Mammary epithelial cell (primary cell): ENCODE measurements at regions of chr13 and their contacts with region 1.

Region 1: DNA sequence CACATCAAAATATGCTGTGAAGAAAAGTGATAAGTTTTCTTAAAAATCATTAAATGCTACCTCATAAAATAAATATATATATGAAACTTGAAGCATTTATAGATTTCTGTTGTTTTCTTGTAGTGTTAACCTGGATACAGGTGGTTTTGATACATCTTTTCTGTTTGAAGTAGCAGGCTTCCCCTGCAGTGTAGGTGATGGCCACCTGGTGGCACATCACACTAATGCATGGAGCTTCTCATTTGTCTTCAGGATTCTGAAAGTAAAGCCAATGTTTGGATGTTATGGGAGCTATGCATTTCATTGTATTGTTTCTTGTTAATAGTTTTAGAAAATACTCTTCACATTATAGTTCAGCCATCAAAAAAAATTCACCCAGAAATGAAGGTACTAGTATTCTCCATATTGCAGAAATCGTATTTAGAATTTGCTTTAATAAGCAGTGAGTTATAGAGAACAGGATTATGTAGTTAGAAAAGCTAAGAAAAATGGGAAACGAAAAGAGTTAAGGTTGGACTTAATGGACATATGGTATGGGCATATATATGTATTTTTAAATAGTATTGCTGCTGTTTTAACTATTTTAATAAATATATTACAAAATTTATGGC is 18.7 kb downstream of the GPR180 start:
- DNase-seq: peak; percentile 28
- H3K4me3 ChIP-seq: no peak overlapping the region
- H3K27ac ChIP-seq: no peak overlapping the region
- H3K4me1 ChIP-seq: no peaks in the 10 kb centered on the region
- H3K27me3 ChIP-seq: no peaks in the 10 kb centered on the region
- CTCF ChIP-seq: peak; percentile 83 to 89

Region 2: GRCh38 chr13:94435604-94436226 is 184.7 kb before region 1 on chr13:
- CTCF ChIA-PET with region 1: interaction called, 13 read pairs
- dilution Hi-C with region 1: no loop called
- in situ Hi-C with region 1: loop called in 1 of 2 experiments (anchors 5 kb)
- intact Hi-C with region 1: loop called (anchors 1 kb)
- DNase-seq: peak; percentile 28
- H3K4me3 ChIP-seq: no peak overlapping the region
- H3K27ac ChIP-seq: no peak overlapping the region
- H3K4me1 ChIP-seq: no peaks in the 10 kb centered on the region
- H3K27me3 ChIP-seq: peaks cover 3% of the 10 kb centered on the region
- CTCF ChIP-seq: peak; percentile 45 to 61

Region 3: GRCh38 chr13:94515374-94515773 is 105.0 kb before region 1 on chr13:
- CTCF ChIA-PET with region 1: no interaction called
- dilution Hi-C with region 1: no loop called
- in situ Hi-C with region 1: no loop called
- intact Hi-C with region 1: no loop called
- DNase-seq: no peak
- H3K4me3 ChIP-seq: no peak overlapping the region
- H3K27ac ChIP-seq: no peak overlapping the region
- H3K4me1 ChIP-seq: no peaks in the 10 kb centered on the region
- H3K27me3 ChIP-seq: no peaks in the 10 kb centered on the region
- CTCF ChIP-seq: no peak

Region 4: DNA sequence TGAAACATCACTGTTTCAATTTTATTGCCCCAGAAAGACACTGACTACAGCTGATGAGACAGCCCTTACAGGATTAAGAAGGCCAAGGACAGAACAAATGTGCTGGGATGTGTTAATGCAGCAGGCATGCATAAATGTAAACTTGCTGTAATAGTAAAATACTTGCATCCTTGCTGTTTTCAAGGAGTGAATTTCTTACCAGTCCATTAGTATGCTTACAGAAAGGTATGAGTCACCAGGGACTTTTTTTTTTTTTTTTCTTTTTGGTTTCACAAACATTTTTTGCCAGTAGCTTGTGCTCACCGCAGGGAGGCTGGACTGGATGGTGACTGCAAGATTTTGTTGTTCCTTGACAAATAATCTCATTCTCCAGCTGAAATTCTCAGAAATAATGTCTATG is 36.4 kb after region 1 on chr13:
- CTCF ChIA-PET with region 1: no interaction called
- dilution Hi-C with region 1: no loop called
- in situ Hi-C with region 1: no loop called
- intact Hi-C with region 1: loop called (anchors 5 kb)
- DNase-seq: peak; percentile 82
- H3K4me3 ChIP-seq: no peak overlapping the region
- H3K27ac ChIP-seq: no peak overlapping the region
- H3K4me1 ChIP-seq: peaks cover 8% of the 10 kb centered on the region
- H3K27me3 ChIP-seq: no peaks in the 10 kb centered on the region
- CTCF ChIP-seq: peak in 1 of 2 donors; percentile 12

Region 5: DNA sequence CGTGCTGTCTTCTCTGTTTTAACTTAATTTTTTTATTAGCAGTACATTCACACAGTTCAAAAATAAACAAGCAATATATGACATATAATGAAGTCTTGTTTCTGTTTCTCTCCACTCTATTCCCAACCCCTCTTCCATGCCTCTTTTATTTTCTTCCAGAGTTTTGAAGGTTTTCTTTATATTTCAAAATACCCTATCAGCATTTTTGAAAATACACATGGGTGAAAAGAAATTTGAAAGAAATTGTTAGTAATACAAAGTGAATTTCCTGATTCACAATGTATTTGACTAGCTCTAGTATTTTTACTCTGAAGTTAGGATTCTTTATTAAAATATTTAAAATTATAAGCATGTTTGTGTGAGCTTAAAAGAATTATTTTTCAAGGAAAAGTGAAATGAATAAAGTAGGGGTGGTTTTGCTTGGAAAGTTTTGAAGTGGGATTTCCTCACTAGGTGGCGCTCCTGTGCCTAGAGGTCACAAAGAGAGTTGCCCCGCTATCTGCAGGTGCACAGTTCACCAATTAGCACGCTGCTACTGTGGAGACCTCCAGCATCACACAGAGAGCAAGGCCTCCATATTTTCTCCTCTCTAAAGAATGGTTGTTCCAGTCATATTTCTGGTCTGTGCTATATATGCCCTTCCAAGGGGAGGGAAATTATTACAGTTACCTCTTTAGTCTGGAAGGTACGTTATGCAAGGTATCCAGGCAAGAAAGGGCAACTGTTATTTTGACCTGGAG is 54.4 kb after region 1 on chr13:
- CTCF ChIA-PET with region 1: no interaction called
- dilution Hi-C with region 1: no loop called
- in situ Hi-C with region 1: no loop called
- intact Hi-C with region 1: loop called (anchors 1 kb)
- DNase-seq: peak; percentile 24
- H3K4me3 ChIP-seq: no peak overlapping the region
- H3K27ac ChIP-seq: no peak overlapping the region
- H3K4me1 ChIP-seq: no peaks in the 10 kb centered on the region
- H3K27me3 ChIP-seq: peaks cover 2% of the 10 kb centered on the region
- CTCF ChIP-seq: peak; percentile 73 to 86

Region 6: GRCh38 chr13:94710881-94711560 is 90.6 kb after region 1 on chr13:
- CTCF ChIA-PET with region 1: no interaction called
- dilution Hi-C with region 1: no loop called
- in situ Hi-C with region 1: no loop called
- intact Hi-C with region 1: loop called (anchors 1 kb)
- DNase-seq: no peak
- H3K4me3 ChIP-seq: peak overlapping the region in 1 of 3 experiments; percentile 26
- H3K27ac ChIP-seq: no peak overlapping the region
- H3K4me1 ChIP-seq: peaks cover 20% of the 10 kb centered on the region
- H3K27me3 ChIP-seq: peaks cover 64% of the 10 kb centered on the region
- CTCF ChIP-seq: no peak

Region 7: DNA sequence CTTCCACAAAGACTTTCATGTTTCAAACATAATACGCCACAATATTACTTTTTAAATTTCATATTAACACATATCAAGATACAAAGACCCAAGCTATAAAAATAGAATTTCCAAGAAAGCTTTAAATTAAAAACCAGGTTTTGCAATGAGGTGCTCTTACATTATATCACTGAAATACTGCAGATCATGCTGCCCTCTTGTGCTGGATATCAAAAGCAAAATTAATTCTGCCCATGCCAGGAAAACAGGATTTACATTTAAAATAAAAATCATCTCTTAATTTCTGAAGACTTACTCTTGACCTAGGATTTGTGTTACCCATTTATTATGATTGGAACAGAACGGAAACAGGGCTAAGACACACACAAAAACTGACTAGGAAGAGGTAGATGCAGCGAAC is 535.8 kb after region 1 on chr13:
- CTCF ChIA-PET with region 1: no interaction called
- dilution Hi-C with region 1: no loop called
- in situ Hi-C with region 1: no loop called
- intact Hi-C with region 1: loop called (anchors 1 kb)
- DNase-seq: no peak
- H3K4me3 ChIP-seq: no peak overlapping the region
- H3K27ac ChIP-seq: no peak overlapping the region
- H3K4me1 ChIP-seq: no peaks in the 10 kb centered on the region
- H3K27me3 ChIP-seq: no peaks in the 10 kb centered on the region
- CTCF ChIP-seq: peak in 1 of 2 donors; percentile 53

Region 8: GRCh38 chr13:95480131-95480545 is 859.7 kb after region 1 on chr13:
- CTCF ChIA-PET with region 1: no interaction called
- dilution Hi-C with region 1: no loop called
- in situ Hi-C with region 1: no loop called
- intact Hi-C with region 1: loop called (anchors 5 kb)
- DNase-seq: no peak
- H3K4me3 ChIP-seq: no peak overlapping the region
- H3K27ac ChIP-seq: no peak overlapping the region
- H3K4me1 ChIP-seq: peaks cover 12% of the 10 kb centered on the region
- H3K27me3 ChIP-seq: no peaks in the 10 kb centered on the region
- CTCF ChIP-seq: no peak